Natural killer cell (primary cell): ENCODE measurements at regions of chr11 and their contacts with region 1.

Region 1: GRCh38 chr11:124920870-124921609 is 2.0 kb downstream of the HEPN1 start:
- DNase-seq: peak; percentile 78 to 92
- ATAC-seq: peak; percentile 82 to 95 (median 94)
- H3K4me3 ChIP-seq: peak overlapping the region; percentile 11
- H3K4me3 Mint-ChIP-seq: peak overlapping the region; percentile 80
- H3K27ac ChIP-seq: peak overlapping the region; percentile 10
- H3K27ac Mint-ChIP-seq: peak overlapping the region in 1 of 2 donors; percentile 23
- H3K4me1 ChIP-seq: peaks cover 17% of the 10 kb centered on the region
- H3K4me1 Mint-ChIP-seq: peaks cover 0 to 11% of the 10 kb centered on the region in 2 donors
- H3K27me3 ChIP-seq: no peaks in the 10 kb centered on the region
- H3K27me3 Mint-ChIP-seq: peaks cover 2 to 6% of the 10 kb centered on the region in 2 donors
- CTCF ChIP-seq: no peak

Region 2: GRCh38 chr11:124875943-124876817 is 44.9 kb before region 1 on chr11:
- intact Hi-C with region 1: loop called (anchors 2 kb)
- DNase-seq: peak; percentile 77 to 89
- ATAC-seq: peak; percentile 92
- H3K4me3 ChIP-seq: peak overlapping the region; percentile 74
- H3K4me3 Mint-ChIP-seq: peak overlapping the region; percentile 90
- H3K27ac ChIP-seq: peak overlapping the region; percentile 85
- H3K27ac Mint-ChIP-seq: peak overlapping the region; percentile 53 to 92
- H3K4me1 ChIP-seq: peaks cover 19% of the 10 kb centered on the region
- H3K4me1 Mint-ChIP-seq: peaks cover 16 to 54% of the 10 kb centered on the region in 2 donors
- H3K27me3 ChIP-seq: peaks cover 6% of the 10 kb centered on the region
- H3K27me3 Mint-ChIP-seq: peaks cover 27 to 30% of the 10 kb centered on the region in 2 donors
- CTCF ChIP-seq: peak; percentile 76

Region 3: GRCh38 chr11:124970925-124971324 is 49.9 kb after region 1 on chr11:
- intact Hi-C with region 1: no loop called
- DNase-seq: no peak
- ATAC-seq: no peak
- H3K4me3 ChIP-seq: no peak overlapping the region
- H3K4me3 Mint-ChIP-seq: no peak overlapping the region
- H3K27ac ChIP-seq: no peak overlapping the region
- H3K27ac Mint-ChIP-seq: no peak overlapping the region
- H3K4me1 ChIP-seq: no peaks in the 10 kb centered on the region
- H3K4me1 Mint-ChIP-seq: no peaks in the 10 kb centered on the region
- H3K27me3 ChIP-seq: no peaks in the 10 kb centered on the region
- H3K27me3 Mint-ChIP-seq: no peaks in the 10 kb centered on the region
- CTCF ChIP-seq: no peak

Region 4: GRCh38 chr11:125022551-125022950 is 101.5 kb after region 1 on chr11:
- intact Hi-C with region 1: no loop called
- DNase-seq: no peak
- ATAC-seq: no peak
- H3K4me3 ChIP-seq: no peak overlapping the region
- H3K4me3 Mint-ChIP-seq: no peak overlapping the region
- H3K27ac ChIP-seq: no peak overlapping the region
- H3K27ac Mint-ChIP-seq: no peak overlapping the region
- H3K4me1 ChIP-seq: no peaks in the 10 kb centered on the region
- H3K4me1 Mint-ChIP-seq: no peaks in the 10 kb centered on the region
- H3K27me3 ChIP-seq: no peaks in the 10 kb centered on the region
- H3K27me3 Mint-ChIP-seq: no peaks in the 10 kb centered on the region
- CTCF ChIP-seq: no peak

Region 5: GRCh38 chr11:125275905-125276618 is 355.0 kb after region 1 on chr11:
- intact Hi-C with region 1: no loop called
- DNase-seq: no peak
- ATAC-seq: no peak
- H3K4me3 ChIP-seq: no peak overlapping the region
- H3K4me3 Mint-ChIP-seq: no peak overlapping the region
- H3K27ac ChIP-seq: no peak overlapping the region
- H3K27ac Mint-ChIP-seq: no peak overlapping the region
- H3K4me1 ChIP-seq: no peaks in the 10 kb centered on the region
- H3K4me1 Mint-ChIP-seq: no peaks in the 10 kb centered on the region
- H3K27me3 ChIP-seq: no peaks in the 10 kb centered on the region
- H3K27me3 Mint-ChIP-seq: peaks cover 11 to 18% of the 10 kb centered on the region in 2 donors
- CTCF ChIP-seq: no peak